GM10248 (cell line): ENCODE measurements at regions of chr17 and their contacts with region 1.

Region 1: GRCh38 chr17:59829217-59830006 is 63.3 kb downstream of the TUBD1 start:
- DNase-seq: peak; percentile 65
- CTCF ChIP-seq: no peak

Region 2: GRCh38 chr17:59786536-59787319 is 42.7 kb before region 1 on chr17:
- CTCF ChIA-PET with region 1: interaction called, 12 read pairs
- POLR2A ChIA-PET with region 1: interaction called, 9 read pairs
- DNase-seq: peak; percentile 78
- CTCF ChIP-seq: no peak

Region 3: GRCh38 chr17:59815965-59816364 is 13.4 kb before region 1 on chr17:
- CTCF ChIA-PET with region 1: interaction called, 17 read pairs
- POLR2A ChIA-PET with region 1: interaction called, 4 read pairs
- DNase-seq: no peak
- CTCF ChIP-seq: no peak

Region 4: GRCh38 chr17:59907467-59907866 is 78.1 kb after region 1 on chr17:
- CTCF ChIA-PET with region 1: no interaction called
- POLR2A ChIA-PET with region 1: no interaction called
- DNase-seq: no peak
- CTCF ChIP-seq: no peak